Activated CD8-positive, alpha-beta T cell treated with anti-CD3 and anti-CD28 coated beads for 36 hours (primary cell): ENCODE measurements at regions of chr2 and their contacts with region 1.

Region 1: DNA sequence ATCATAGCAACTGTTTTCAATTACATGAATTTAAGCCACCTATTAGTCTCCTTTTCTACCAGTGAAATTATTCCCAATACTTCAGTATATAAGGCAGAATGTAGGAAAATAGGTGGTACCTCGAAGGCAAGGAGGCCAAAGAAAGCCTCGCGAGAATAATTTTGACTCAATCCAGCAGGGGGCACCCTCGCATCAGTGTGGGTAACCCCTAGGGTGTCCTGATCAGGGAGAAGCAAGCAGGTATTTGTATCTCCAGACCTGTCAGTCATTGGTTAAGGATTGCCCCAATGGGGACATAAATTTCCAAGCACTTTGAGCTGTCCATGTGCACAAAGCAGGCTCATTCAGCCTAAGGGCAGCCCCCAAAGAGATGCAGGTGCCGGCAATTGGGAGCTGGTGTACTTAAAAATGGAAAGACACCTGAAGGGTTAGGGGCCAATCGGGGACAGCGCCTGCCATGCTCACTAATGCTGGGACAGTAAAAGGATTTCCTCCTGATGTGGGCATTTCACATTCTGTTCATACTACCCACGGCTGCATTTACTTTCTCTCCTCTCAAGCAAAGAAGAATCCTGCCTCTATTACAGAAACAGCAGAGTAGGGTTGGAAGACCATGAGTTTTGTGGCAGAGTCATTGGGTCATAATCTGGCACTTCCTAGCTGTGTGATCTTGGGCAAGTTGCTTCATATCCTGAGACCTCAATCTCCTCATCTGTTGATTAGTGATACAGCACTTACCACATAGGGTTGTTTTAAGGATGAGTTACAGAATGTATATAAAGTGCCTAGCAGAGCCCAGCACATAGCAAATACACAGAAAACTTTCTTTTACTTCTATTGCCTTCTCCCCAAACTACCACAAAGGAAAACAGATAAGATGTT is 136.1 kb downstream of the ICOS start:
- DNase-seq: peak; percentile 82
- ATAC-seq: peak; percentile 79
- H3K4me3 Mint-ChIP-seq: no peak overlapping the region
- H3K27ac Mint-ChIP-seq: no peak overlapping the region
- H3K4me1 Mint-ChIP-seq: peaks cover 2% of the 10 kb centered on the region
- H3K27me3 Mint-ChIP-seq: peaks cover 7% of the 10 kb centered on the region
- CTCF ChIP-seq: peak; percentile 93

Region 2: GRCh38 chr2:204033611-204034495 is 38.8 kb before region 1 on chr2:
- CTCF ChIA-PET with region 1: interaction called, 10 read pairs
- POLR2A ChIA-PET with region 1: no interaction called
- intact Hi-C with region 1: no loop called
- DNase-seq: no peak
- ATAC-seq: no peak
- H3K4me3 Mint-ChIP-seq: no peak overlapping the region
- H3K27ac Mint-ChIP-seq: no peak overlapping the region
- H3K4me1 Mint-ChIP-seq: no peaks in the 10 kb centered on the region
- H3K27me3 Mint-ChIP-seq: no peaks in the 10 kb centered on the region
- CTCF ChIP-seq: no peak

Region 3: DNA sequence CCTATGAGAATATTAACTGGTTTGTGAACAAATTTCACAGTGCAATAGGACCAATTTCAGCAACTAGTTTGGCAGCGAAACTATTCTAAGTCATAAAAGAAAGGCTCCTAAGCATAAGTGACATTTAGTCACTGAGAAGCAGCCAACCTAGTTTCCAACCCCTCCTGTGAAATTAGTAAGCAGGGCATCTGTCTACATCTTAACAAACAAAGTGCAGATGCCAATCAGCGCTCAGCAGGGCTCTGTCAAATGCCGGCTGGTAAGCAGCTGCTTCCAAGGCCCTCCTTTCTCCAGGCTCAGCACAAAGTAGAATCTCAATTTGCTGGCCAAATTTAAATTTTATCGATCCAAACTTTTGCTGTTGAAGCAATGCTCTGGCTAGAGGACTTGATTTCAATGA is 11.4 kb before region 1 on chr2:
- CTCF ChIA-PET with region 1: interaction called, 16 read pairs
- POLR2A ChIA-PET with region 1: no interaction called
- intact Hi-C with region 1: no loop called
- DNase-seq: no peak
- ATAC-seq: no peak
- H3K4me3 Mint-ChIP-seq: no peak overlapping the region
- H3K27ac Mint-ChIP-seq: no peak overlapping the region
- H3K4me1 Mint-ChIP-seq: no peaks in the 10 kb centered on the region
- H3K27me3 Mint-ChIP-seq: peaks cover 4% of the 10 kb centered on the region
- CTCF ChIP-seq: no peak

Region 4: GRCh38 chr2:204135752-204136151 is 63.1 kb after region 1 on chr2:
- CTCF ChIA-PET with region 1: interaction called, 25 read pairs
- POLR2A ChIA-PET with region 1: no interaction called
- intact Hi-C with region 1: loop called (anchors 2 kb)
- DNase-seq: no peak
- ATAC-seq: peak; percentile 51
- H3K4me3 Mint-ChIP-seq: no peak overlapping the region
- H3K27ac Mint-ChIP-seq: no peak overlapping the region
- H3K4me1 Mint-ChIP-seq: no peaks in the 10 kb centered on the region
- H3K27me3 Mint-ChIP-seq: peaks cover 4% of the 10 kb centered on the region
- CTCF ChIP-seq: no peak

Region 5: DNA sequence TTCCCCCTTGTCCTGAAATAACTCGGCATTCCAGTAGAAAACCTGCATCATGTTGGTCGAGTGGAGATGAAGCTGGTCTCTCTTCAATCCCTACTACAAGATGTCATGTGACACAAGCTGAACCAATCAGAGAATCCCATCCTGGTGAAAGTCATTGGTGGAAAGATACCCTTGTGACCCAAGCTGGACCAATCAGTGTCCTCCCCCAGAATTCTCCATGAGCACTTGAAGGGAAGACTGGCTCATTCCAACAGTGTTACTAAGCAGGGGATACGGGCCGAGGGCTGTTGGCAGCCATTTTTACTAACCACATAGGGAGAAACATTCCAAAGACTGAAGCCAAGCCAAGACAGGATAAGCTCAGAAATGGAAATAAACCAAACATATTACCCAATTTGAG is 162.2 kb after region 1 on chr2:
- CTCF ChIA-PET with region 1: no interaction called
- POLR2A ChIA-PET with region 1: no interaction called
- intact Hi-C with region 1: no loop called
- DNase-seq: no peak
- ATAC-seq: no peak
- H3K4me3 Mint-ChIP-seq: no peak overlapping the region
- H3K27ac Mint-ChIP-seq: no peak overlapping the region
- H3K4me1 Mint-ChIP-seq: no peaks in the 10 kb centered on the region
- H3K27me3 Mint-ChIP-seq: peaks cover 9% of the 10 kb centered on the region
- CTCF ChIP-seq: no peak

Region 6: GRCh38 chr2:204260162-204260877 is 187.6 kb after region 1 on chr2:
- CTCF ChIA-PET with region 1: interaction called, 12 read pairs
- POLR2A ChIA-PET with region 1: no interaction called
- intact Hi-C with region 1: no loop called
- DNase-seq: peak; percentile 73
- ATAC-seq: peak; percentile 24
- H3K4me3 Mint-ChIP-seq: no peak overlapping the region
- H3K27ac Mint-ChIP-seq: no peak overlapping the region
- H3K4me1 Mint-ChIP-seq: no peaks in the 10 kb centered on the region
- H3K27me3 Mint-ChIP-seq: peaks cover 26% of the 10 kb centered on the region
- CTCF ChIP-seq: peak; percentile 72

Region 7: GRCh38 chr2:204479557-204479956 is 406.9 kb after region 1 on chr2:
- CTCF ChIA-PET with region 1: no interaction called
- POLR2A ChIA-PET with region 1: no interaction called
- intact Hi-C with region 1: no loop called
- DNase-seq: peak; percentile 31
- ATAC-seq: peak; percentile 49
- H3K4me3 Mint-ChIP-seq: no peak overlapping the region
- H3K27ac Mint-ChIP-seq: no peak overlapping the region
- H3K4me1 Mint-ChIP-seq: no peaks in the 10 kb centered on the region
- H3K27me3 Mint-ChIP-seq: no peaks in the 10 kb centered on the region
- CTCF ChIP-seq: no peak